ENCODE measurements at regions of chr10 and their contacts with region 1.

Region 1: GRCh38 chr10:96513698-96514561 is at the start of gene TLL2:
- DNase-seq: peak; percentile 73
- ATAC-seq: peak; percentile 80
- H3K4me3 Mint-ChIP-seq: peak within 1 kb of the TSS; percentile 83
- H3K27ac Mint-ChIP-seq: peak within 1 kb of the TSS; percentile 74
- H3K4me1 Mint-ChIP-seq: peaks cover 26% of the 10 kb centered on the region
- H3K27me3 Mint-ChIP-seq: peaks cover 11% of the 10 kb centered on the region
- CTCF ChIP-seq: no peak
- total RNA-seq, gene TLL2: 1.6 and 1.8 TPM in 2 replicates

Region 2: GRCh38 chr10:95656291-95657164 is 857.4 kb before region 1 on chr10 and contains the start of gene ALDH18A1:
- CTCF ChIA-PET with region 1: no interaction called
- POLR2A ChIA-PET with region 1: no interaction called
- intact Hi-C with region 1: loop called (anchors 5 kb)
- DNase-seq: peak; percentile 94
- ATAC-seq: peak; percentile 96
- H3K4me3 Mint-ChIP-seq: peak within 1 kb of the TSS; percentile 98
- H3K27ac Mint-ChIP-seq: peak within 1 kb of the TSS; percentile 86
- H3K4me1 Mint-ChIP-seq: peaks cover 31% of the 10 kb centered on the region
- H3K27me3 Mint-ChIP-seq: no peaks in the 10 kb centered on the region
- CTCF ChIP-seq: no peak
- total RNA-seq, gene ALDH18A1: 45.9 and 53.0 TPM in 2 replicates

Region 3: DNA sequence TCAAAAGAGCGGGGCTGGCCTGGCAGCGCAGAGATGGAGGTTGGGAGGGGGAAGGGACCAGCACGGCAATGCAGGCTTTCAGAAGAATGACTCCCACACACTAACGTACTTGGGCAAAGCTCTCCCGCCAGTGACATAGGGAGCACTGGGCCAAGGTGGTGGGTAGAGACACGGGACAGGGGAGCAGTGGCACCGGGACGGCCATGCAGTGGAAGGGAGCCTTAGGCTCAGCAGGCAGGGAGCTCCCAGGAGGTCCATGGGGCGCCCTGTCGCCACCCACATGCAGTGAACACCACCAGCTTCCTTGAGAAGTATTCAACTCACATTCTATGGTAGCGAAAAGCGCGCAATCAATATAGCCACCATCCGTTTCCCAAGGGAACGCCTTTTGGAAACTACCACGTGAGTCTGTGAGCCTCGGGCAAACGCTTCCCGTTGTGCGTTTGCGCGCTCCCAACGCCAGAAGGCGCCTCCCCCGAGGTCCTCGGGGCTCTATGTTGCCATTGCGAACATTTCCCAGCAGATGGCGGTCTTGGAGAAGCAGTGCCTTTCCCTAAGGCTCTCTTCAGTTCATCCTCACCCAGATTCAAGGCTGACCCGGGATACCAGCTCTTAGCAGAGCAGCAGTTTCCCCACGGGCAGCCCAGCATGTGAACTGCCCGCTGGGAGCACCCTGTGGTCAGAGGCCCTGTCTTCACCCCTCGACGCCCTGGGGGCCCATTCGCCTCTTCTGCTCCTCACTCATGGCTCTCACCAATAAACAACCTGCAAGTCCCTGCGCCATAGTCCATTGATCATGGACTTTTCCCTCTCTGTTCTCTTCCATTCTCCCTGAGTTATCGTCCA is 138.7 kb before region 1 on chr10:
- CTCF ChIA-PET with region 1: interaction called, 3 read pairs
- POLR2A ChIA-PET with region 1: no interaction called
- intact Hi-C with region 1: loop called (anchors 1 kb)
- DNase-seq: peak; percentile 61
- ATAC-seq: peak; percentile 92
- H3K4me3 Mint-ChIP-seq: peak overlapping the region; percentile 78
- H3K27ac Mint-ChIP-seq: no peak overlapping the region
- H3K4me1 Mint-ChIP-seq: peaks cover 6% of the 10 kb centered on the region
- H3K27me3 Mint-ChIP-seq: peaks cover 13% of the 10 kb centered on the region
- CTCF ChIP-seq: peak; percentile 84

Region 4: DNA sequence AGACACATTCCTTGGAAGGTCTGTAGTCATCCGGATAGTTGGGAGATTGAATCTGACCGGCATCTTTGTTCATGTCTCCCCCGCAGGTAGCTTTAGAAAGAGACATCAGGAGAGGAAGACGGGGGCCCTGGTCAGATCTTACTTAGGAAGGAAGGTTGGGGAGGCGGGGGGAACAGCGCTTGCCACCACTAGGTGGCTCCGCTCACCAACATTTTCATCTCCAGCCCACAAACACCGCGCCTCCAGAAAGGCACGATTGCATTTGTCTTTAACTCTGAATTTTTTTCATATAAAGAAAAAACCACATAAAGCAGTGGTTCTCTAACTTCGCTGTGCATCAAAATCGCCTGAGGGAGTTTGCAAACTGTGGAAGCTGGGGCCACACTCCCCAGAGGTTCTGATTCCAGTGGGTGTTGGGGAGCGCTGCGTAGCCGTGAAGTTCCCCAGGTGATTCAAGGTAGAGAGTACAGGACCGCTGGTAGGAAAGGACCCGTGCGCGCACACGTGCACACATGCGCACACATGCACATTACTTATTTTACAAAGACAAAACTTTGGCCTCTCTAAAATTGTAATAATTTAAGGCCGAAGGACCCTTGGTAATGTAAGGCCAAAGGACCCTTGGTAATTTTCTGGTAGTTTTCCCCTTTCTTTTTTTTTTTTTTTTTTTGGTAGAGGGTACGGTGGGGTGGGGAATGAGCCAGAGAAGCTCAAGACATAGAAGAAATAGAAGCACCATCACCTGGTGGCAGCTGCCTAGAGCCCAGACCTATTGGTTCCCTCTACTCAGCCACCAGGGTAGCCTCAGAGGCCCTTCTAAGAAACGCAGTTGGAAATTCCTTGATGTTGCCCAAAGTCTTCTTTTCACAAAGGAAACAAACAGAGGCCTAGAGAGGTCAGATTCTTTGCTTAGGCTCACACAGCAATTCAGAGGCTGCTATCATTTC is 117.7 kb before region 1 on chr10:
- CTCF ChIA-PET with region 1: interaction called, 8 read pairs
- POLR2A ChIA-PET with region 1: no interaction called
- intact Hi-C with region 1: loop called (anchors 1 kb)
- DNase-seq: peak; percentile 42
- ATAC-seq: peak; percentile 79
- H3K4me3 Mint-ChIP-seq: no peak overlapping the region
- H3K27ac Mint-ChIP-seq: no peak overlapping the region
- H3K4me1 Mint-ChIP-seq: peaks cover 5% of the 10 kb centered on the region
- H3K27me3 Mint-ChIP-seq: peaks cover 24% of the 10 kb centered on the region
- CTCF ChIP-seq: peak; percentile 90

Region 5: GRCh38 chr10:96416643-96417042 is 97.3 kb before region 1 on chr10:
- CTCF ChIA-PET with region 1: no interaction called
- POLR2A ChIA-PET with region 1: no interaction called
- intact Hi-C with region 1: no loop called
- DNase-seq: no peak
- ATAC-seq: no peak
- H3K4me3 Mint-ChIP-seq: no peak overlapping the region
- H3K27ac Mint-ChIP-seq: no peak overlapping the region
- H3K4me1 Mint-ChIP-seq: no peaks in the 10 kb centered on the region
- H3K27me3 Mint-ChIP-seq: peaks cover 9% of the 10 kb centered on the region
- CTCF ChIP-seq: no peak

Region 6: DNA sequence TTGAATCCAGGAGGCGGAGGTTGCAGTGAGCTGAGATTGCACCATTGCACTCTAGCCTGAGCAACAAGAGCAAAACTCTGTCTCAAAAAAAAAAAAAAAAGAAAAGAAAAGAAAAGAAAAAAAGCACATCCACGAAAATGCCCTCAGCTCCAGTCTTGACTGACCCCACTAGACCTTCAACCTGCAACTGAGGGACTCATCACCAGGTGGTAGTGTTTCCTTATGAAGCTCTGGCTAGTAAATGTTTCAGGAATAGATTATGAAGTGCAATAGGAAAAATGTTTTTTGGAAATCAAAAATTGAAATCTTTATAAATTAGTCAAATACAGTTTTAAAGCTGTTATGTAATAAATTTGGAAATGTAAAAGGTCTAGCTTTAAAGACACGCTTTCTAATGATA is 22.6 kb before region 1 on chr10:
- CTCF ChIA-PET with region 1: interaction called, 5 read pairs
- POLR2A ChIA-PET with region 1: no interaction called
- intact Hi-C with region 1: loop called (anchors 2 kb)
- DNase-seq: no peak
- ATAC-seq: no peak
- H3K4me3 Mint-ChIP-seq: no peak overlapping the region
- H3K27ac Mint-ChIP-seq: no peak overlapping the region
- H3K4me1 Mint-ChIP-seq: no peaks in the 10 kb centered on the region
- H3K27me3 Mint-ChIP-seq: peaks cover 8% of the 10 kb centered on the region
- CTCF ChIP-seq: no peak

Region 7: DNA sequence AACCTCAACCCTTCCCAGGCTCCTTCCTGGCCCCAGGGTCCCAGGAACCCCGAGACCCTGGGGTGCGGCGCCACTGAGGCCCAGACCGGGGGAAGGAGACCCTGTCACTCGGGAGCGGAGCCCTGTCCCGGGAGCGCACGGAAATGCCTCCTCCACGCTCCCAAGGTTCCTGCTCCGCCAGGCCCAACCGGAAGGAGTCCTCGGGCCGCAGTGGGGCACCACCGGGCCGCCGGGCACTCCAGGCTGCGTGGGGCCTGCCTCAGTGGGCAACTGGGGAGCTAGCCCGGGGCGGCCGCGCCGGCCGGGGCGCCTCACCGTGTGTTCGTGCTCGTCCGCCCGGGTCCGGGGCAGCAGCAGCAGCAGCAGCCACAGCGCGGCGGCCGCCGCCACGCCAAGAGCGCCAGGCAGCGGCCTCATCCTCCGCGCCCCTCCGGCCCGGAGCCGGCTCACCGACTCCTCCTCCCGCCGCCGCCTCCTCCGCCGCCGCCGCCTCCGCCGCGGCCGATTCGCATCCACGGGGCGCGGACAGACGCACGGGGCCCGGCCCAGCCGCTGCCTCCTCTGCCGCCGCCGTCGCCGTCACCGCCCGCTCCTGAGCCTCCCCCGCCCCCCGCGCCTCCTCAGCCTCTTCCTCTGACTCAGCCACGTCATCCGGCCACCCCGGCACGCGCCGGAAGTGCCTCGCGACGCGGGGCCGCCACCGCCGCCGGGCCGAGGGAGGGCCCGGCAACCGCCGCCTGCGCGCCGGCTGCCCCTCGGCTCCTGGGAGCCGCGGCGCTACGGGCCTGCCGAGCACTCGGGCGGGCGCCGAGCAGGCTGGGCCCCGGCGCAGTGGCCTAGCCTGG is 72.7 kb after region 1 on chr10 and contains the start of gene TM9SF3:
- CTCF ChIA-PET with region 1: no interaction called
- POLR2A ChIA-PET with region 1: no interaction called
- intact Hi-C with region 1: loop called (anchors 1 kb)
- DNase-seq: peak; percentile 84
- ATAC-seq: peak; percentile 82
- H3K4me3 Mint-ChIP-seq: peak within 1 kb of the TSS; percentile 87
- H3K27ac Mint-ChIP-seq: peak within 1 kb of the TSS; percentile 71
- H3K4me1 Mint-ChIP-seq: peaks cover 36% of the 10 kb centered on the region
- H3K27me3 Mint-ChIP-seq: no peaks in the 10 kb centered on the region
- CTCF ChIP-seq: no peak
- total RNA-seq, gene TM9SF3: 61.7 and 62.7 TPM in 2 replicates

Region 8: DNA sequence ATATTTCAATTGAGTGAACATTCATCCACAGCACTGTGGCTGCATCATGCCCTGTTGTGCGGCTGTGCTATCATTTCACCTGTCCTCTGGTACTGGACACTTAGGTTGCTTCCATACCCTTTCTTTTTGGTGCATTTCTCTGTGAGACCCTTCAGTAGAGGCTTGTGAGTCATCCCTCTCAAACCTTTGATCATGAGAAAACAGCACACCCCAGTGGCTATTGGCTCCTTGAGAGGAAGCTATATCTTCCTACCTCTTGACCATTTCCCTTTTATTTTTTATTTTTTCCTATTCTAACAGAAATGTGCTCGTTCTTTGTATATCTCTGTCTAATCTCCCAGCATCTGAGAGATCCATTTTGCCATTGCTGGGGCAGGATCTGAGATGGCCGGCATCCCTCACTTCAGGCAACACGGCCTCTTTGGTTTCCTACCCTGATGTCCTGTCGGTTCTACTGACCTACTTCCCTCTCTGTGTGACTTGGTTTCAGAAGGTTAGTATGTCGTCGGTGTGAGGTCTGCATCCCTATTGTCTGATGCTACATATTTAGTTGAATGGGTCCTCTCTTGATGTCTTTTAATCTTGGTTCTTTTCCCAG is 230.2 kb after region 1 on chr10:
- CTCF ChIA-PET with region 1: no interaction called
- POLR2A ChIA-PET with region 1: interaction called, 3 read pairs
- intact Hi-C with region 1: loop called (anchors 5 kb)
- DNase-seq: no peak
- ATAC-seq: no peak
- H3K4me3 Mint-ChIP-seq: no peak overlapping the region
- H3K27ac Mint-ChIP-seq: peak overlapping the region; percentile 77
- H3K4me1 Mint-ChIP-seq: peaks cover 73% of the 10 kb centered on the region
- H3K27me3 Mint-ChIP-seq: no peaks in the 10 kb centered on the region
- CTCF ChIP-seq: no peak